ENCODE measurements at regions of chr7 and their contacts with region 1.

Region 1: DNA sequence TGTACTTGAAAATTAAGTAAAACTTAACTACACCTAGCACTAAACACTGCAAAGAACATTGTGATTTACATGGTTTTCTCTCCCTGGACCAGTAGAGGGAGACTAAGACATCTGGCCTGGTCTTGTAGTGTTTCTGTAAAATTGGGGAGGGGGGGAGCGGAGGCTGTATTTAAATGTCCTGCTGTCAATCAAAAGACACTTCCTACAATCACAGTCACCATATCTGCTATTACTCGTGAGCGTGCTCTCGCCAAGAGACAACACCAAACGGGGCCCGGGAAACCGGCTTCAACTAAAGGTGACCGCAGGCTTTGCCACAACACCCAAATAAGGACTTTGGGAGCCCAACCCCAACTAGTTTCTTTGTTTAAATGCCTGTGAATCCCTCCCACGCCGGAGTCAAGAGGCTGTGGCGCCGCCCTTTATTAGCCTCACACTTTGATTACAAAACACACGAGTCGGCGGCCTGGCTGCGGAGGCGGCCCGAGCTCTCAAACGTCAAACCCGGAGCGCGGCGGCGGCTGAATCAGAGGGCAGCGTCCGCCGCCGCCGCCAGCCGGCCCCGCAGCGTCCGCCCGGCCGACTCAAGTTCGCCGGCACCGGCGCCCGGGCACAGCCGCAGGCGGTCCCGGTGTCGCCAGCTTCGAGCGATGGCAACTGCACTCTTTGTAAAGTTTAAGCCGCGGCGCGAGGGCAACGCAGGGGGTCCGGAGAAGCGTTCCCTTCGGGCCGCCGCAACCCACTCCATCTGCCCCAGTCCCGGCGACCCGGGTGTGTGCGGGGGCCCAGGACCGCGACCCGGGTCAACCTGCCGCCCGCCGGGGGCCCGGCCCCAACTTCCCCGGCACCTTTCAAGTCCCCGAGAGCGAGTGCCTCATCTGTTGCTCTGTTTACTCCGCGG is 1.3 kb downstream of the KDM7A start:
- DNase-seq: peak; percentile 85 to 97
- ATAC-seq: peak; percentile 67 to 82 (median 68)
- H3K4me3 ChIP-seq: peak overlapping the region; percentile 41
- H3K4me3 Mint-ChIP-seq: peak overlapping the region; percentile 89
- H3K27ac ChIP-seq: peak overlapping the region; percentile 93
- H3K27ac Mint-ChIP-seq: peak overlapping the region; percentile 92 to 94
- H3K4me1 ChIP-seq: peaks cover 18% of the 10 kb centered on the region
- H3K4me1 Mint-ChIP-seq: peaks cover 31 to 41% of the 10 kb centered on the region in 2 donors
- H3K27me3 ChIP-seq: no peaks in the 10 kb centered on the region
- H3K27me3 Mint-ChIP-seq: peaks cover 0 to 3% of the 10 kb centered on the region in 2 donors
- CTCF ChIP-seq: peak; percentile 68

Region 2: GRCh38 chr7:139359366-139360209 is 815.9 kb before region 1 on chr7 and contains the start of gene LUC7L2:
- intact Hi-C with region 1: loop called (anchors 5 kb)
- DNase-seq: peak; percentile 98 to 99
- ATAC-seq: peak; percentile 78 to 95 (median 81)
- H3K4me3 ChIP-seq: peak within 1 kb of the TSS; percentile 98
- H3K4me3 Mint-ChIP-seq: peak within 1 kb of the TSS; percentile 98
- H3K27ac ChIP-seq: peak within 1 kb of the TSS; percentile 99
- H3K27ac Mint-ChIP-seq: peak within 1 kb of the TSS; percentile 97 to 98
- H3K4me1 ChIP-seq: peaks cover 17% of the 10 kb centered on the region
- H3K4me1 Mint-ChIP-seq: peaks cover 38 to 40% of the 10 kb centered on the region in 2 donors
- H3K27me3 ChIP-seq: no peaks in the 10 kb centered on the region
- H3K27me3 Mint-ChIP-seq: no peaks in the 10 kb centered on the region
- CTCF ChIP-seq: no peak
- total RNA-seq, gene LUC7L2: 183 to 192 (median 186) TPM

Region 3: DNA sequence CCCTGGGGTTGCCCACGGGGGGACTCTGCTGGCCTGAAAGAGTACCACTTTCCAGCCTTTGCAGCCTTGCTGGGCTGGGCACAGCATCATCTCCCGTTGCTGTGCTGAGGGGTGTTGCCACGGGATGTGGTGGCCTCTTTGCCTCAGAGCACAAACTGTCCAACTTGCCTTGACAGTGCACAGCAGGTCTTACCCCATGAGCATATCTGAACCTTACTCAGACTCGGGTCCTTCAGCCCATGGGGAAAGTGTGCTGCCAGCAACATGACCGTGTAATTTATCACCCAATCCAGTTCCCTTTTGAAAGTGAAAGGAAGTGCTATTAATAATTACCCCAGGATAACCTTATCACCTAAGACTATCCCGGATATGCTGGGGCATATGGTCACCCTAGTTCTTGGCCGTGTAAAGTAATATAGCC is 299.6 kb before region 1 on chr7:
- intact Hi-C with region 1: loop called (anchors 10 kb)
- DNase-seq: peak in 1 of 2 donors; percentile 56
- ATAC-seq: peak; percentile 66 to 80 (median 79)
- H3K4me3 ChIP-seq: no peak overlapping the region
- H3K4me3 Mint-ChIP-seq: peak overlapping the region; percentile 74
- H3K27ac ChIP-seq: peak overlapping the region; percentile 88
- H3K27ac Mint-ChIP-seq: peak overlapping the region; percentile 83
- H3K4me1 ChIP-seq: peaks cover 48% of the 10 kb centered on the region
- H3K4me1 Mint-ChIP-seq: peaks cover 73 to 81% of the 10 kb centered on the region in 2 donors
- H3K27me3 ChIP-seq: no peaks in the 10 kb centered on the region
- H3K27me3 Mint-ChIP-seq: no peaks in the 10 kb centered on the region
- CTCF ChIP-seq: no peak

Region 4: GRCh38 chr7:140230861-140231770 is 55.6 kb after region 1 on chr7:
- intact Hi-C with region 1: loop called (anchors 1 kb)
- DNase-seq: peak; percentile 40 to 78
- ATAC-seq: peak; percentile 18 to 39 (median 35)
- H3K4me3 ChIP-seq: peak overlapping the region; percentile 55
- H3K4me3 Mint-ChIP-seq: peak overlapping the region; percentile 93
- H3K27ac ChIP-seq: peak overlapping the region; percentile 65
- H3K27ac Mint-ChIP-seq: peak overlapping the region; percentile 94 to 98
- H3K4me1 ChIP-seq: peaks cover 26% of the 10 kb centered on the region
- H3K4me1 Mint-ChIP-seq: peaks cover 27 to 34% of the 10 kb centered on the region in 2 donors
- H3K27me3 ChIP-seq: no peaks in the 10 kb centered on the region
- H3K27me3 Mint-ChIP-seq: peaks cover 0 to 3% of the 10 kb centered on the region in 2 donors
- CTCF ChIP-seq: no peak

Region 5: GRCh38 chr7:140304191-140304799 is 128.8 kb after region 1 on chr7:
- intact Hi-C with region 1: loop called (anchors 1 kb)
- DNase-seq: peak in 1 of 2 donors; percentile 79
- ATAC-seq: peak; percentile 87 to 98 (median 92)
- H3K4me3 ChIP-seq: no peak overlapping the region
- H3K4me3 Mint-ChIP-seq: no peak overlapping the region
- H3K27ac ChIP-seq: peak overlapping the region; percentile 5
- H3K27ac Mint-ChIP-seq: no peak overlapping the region
- H3K4me1 ChIP-seq: peaks cover 8% of the 10 kb centered on the region
- H3K4me1 Mint-ChIP-seq: peaks cover 6 to 8% of the 10 kb centered on the region in 2 donors
- H3K27me3 ChIP-seq: no peaks in the 10 kb centered on the region
- H3K27me3 Mint-ChIP-seq: peaks cover 0 to 8% of the 10 kb centered on the region in 2 donors
- CTCF ChIP-seq: peak; percentile 44

Region 6: DNA sequence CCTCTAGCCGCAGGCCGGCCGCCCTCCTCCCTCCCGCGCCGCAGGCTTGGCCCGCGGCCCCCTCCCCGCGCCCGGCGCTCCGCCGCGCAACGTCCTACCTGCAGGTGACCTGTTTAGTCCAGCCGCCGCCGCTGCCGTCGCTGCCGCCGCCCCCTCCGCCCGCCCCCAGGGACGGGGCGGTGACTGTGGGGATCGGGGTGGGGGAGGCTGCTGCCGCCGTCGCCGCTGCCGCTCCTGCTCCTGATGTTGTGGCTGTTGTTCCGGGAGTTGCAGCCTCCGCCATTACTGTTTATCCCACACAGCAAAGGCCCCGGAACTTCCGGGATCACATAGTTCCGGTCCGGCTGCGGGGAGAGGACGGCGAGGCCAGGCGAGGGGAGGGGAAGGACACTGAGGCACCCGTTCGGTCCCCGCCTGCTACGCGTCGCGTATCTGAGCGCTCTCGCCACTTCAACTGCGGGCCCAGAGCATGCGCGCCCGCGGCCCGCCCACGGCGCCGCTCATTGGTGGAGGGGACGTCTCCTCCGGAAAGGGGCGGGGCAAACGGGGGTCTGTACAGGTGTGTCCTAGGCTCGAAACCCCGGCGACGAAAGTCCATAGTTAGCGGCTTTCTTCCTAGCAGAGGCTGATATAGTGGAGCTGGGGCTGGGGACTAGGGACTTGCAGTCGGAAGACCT is 303.7 kb after region 1 on chr7 and contains the start of gene MKRN1:
- intact Hi-C with region 1: loop called (anchors 2 kb)
- DNase-seq: peak; percentile 83 to 95
- ATAC-seq: peak; percentile 84 to 93 (median 91)
- H3K4me3 ChIP-seq: peak within 1 kb of the TSS; percentile 86
- H3K4me3 Mint-ChIP-seq: peak within 1 kb of the TSS; percentile 99
- H3K27ac ChIP-seq: peak within 1 kb of the TSS; percentile 75
- H3K27ac Mint-ChIP-seq: peak within 1 kb of the TSS; percentile 93
- H3K4me1 ChIP-seq: peaks cover 26% of the 10 kb centered on the region
- H3K4me1 Mint-ChIP-seq: peaks cover 30 to 34% of the 10 kb centered on the region in 2 donors
- H3K27me3 ChIP-seq: no peaks in the 10 kb centered on the region
- H3K27me3 Mint-ChIP-seq: no peaks in the 10 kb centered on the region
- CTCF ChIP-seq: no peak
- total RNA-seq, gene MKRN1: 119 to 146 (median 136) TPM

Measured in natural killer cell (primary cell).